ENCODE measurements at regions of chr1 and their contacts with region 1.

Region 1: GRCh38 chr1:51523931-51524330 is 4.9 kb upstream of the EPS15 start:
- DNase-seq: no peak
- ATAC-seq: no peak
- H3K4me3 ChIP-seq: no peak overlapping the region
- H3K27ac ChIP-seq: no peak overlapping the region
- H3K4me1 ChIP-seq: no peaks in the 10 kb centered on the region
- CTCF ChIP-seq: no peak
- EP300 ChIP-seq: no peak
- POLR2A ChIP-seq: no peak
- RAD21 ChIP-seq: no peak

Region 2: GRCh38 chr1:51100264-51100880 is 423.6 kb before region 1 on chr1:
- CTCF ChIA-PET with region 1: no interaction called
- POLR2A ChIA-PET with region 1: no interaction called
- DNase-seq: no peak
- ATAC-seq: no peak
- H3K4me3 ChIP-seq: no peak overlapping the region
- H3K27ac ChIP-seq: no peak overlapping the region
- H3K4me1 ChIP-seq: no peaks in the 10 kb centered on the region
- CTCF ChIP-seq: no peak
- EP300 ChIP-seq: no peak
- POLR2A ChIP-seq: no peak
- RAD21 ChIP-seq: no peak

Region 3: DNA sequence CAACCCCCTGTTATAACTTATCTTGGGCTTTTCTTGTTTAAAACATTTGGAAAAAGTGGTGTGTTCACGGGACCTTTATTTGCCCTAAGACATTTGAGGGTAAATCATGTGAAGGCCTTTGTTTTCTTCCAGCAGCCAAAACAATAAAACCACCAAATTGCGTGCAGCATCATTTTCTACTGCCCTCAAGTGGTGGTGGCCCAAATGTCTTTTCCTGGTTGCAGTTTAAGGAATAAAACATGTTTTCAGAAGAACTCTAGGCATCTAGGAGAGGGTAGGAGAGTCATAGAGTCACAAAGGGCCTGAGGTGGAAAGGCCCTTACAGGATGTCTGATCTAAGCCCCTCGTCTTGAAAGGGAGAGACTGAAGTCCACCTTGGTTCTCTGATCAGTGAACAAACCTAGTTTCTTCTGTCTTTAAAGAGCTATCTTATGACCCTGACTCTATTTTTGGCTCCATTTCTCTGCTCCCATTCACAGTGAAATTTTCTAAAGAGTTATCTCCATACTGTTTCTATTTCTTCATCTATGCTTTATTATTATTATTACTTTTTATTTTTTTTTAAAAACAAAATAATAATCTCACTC is 11.2 kb after region 1 on chr1:
- CTCF ChIA-PET with region 1: interaction called, 11 read pairs
- POLR2A ChIA-PET with region 1: no interaction called
- DNase-seq: peak; percentile 20 to 43
- ATAC-seq: peak; percentile 54 to 78; a peak in 4 of 6 replicates
- H3K4me3 ChIP-seq: no peak overlapping the region
- H3K27ac ChIP-seq: no peak overlapping the region
- H3K4me1 ChIP-seq: no peaks in the 10 kb centered on the region
- CTCF ChIP-seq: peak; percentile 54
- EP300 ChIP-seq: no peak
- POLR2A ChIP-seq: no peak
- RAD21 ChIP-seq: peak; percentile 58 to 61